T-cell (primary cell): ENCODE measurements at regions of chr12 and their contacts with region 1.

Region 1: GRCh38 chr12:57803319-57803893 is 15.1 kb downstream of the AVIL start:
- DNase-seq: peak in 26 of 35 experiments; percentile 4 to 52 (median 22)
- ATAC-seq: peak in 2 of 4 experiments; percentile 37 to 58
- H3K4me3 ChIP-seq: no peak overlapping the region
- H3K4me3 Mint-ChIP-seq: no peak overlapping the region
- H3K27ac ChIP-seq: no peak overlapping the region
- H3K27ac Mint-ChIP-seq: no peak overlapping the region
- H3K4me1 ChIP-seq: no peaks in the 10 kb centered on the region
- H3K4me1 Mint-ChIP-seq: no peaks in the 10 kb centered on the region
- H3K27me3 ChIP-seq: no peaks in the 10 kb centered on the region
- H3K27me3 Mint-ChIP-seq: no peaks in the 10 kb centered on the region

Region 2: GRCh38 chr12:57771708-57772428 is 31.5 kb before region 1 on chr12 and contains the start of gene METTL1:
- CTCF ChIA-PET with region 1: no interaction called
- POLR2A ChIA-PET with region 1: interaction called in 1 of 2 experiments, 10 read pairs
- DNase-seq: peak; percentile 74 to 93 (median 85)
- ATAC-seq: peak; percentile 90 to 92 (median 90)
- H3K4me3 ChIP-seq: peak within 1 kb of the TSS; percentile 74 to 91
- H3K4me3 Mint-ChIP-seq: peak within 1 kb of the TSS; percentile 94 to 96 (median 95)
- H3K27ac ChIP-seq: peak within 1 kb of the TSS; percentile 61
- H3K27ac Mint-ChIP-seq: peak within 1 kb of the TSS; percentile 93 to 94
- H3K4me1 ChIP-seq: peaks cover 9 to 26% of the 10 kb centered on the region in 2 experiments
- H3K4me1 Mint-ChIP-seq: peaks cover 12 to 24% (median 21%) of the 10 kb centered on the region in 3 donors
- H3K27me3 ChIP-seq: peaks cover 5% of the 10 kb centered on the region in 2 experiments
- H3K27me3 Mint-ChIP-seq: peaks cover 0 to 5% of the 10 kb centered on the region in 2 donors
- total RNA-seq, gene METTL1: 10.3 to 17.4 (median 14.5) TPM

Region 3: GRCh38 chr12:57865090-57865751 is 61.8 kb after region 1 on chr12:
- CTCF ChIA-PET with region 1: interaction called in 1 of 2 experiments, 10 read pairs
- POLR2A ChIA-PET with region 1: no interaction called
- DNase-seq: peak in 22 of 35 experiments; percentile 12 to 65 (median 30)
- ATAC-seq: peak; percentile 82 to 90 (median 86)
- H3K4me3 ChIP-seq: peak overlapping the region; percentile 44 to 68
- H3K4me3 Mint-ChIP-seq: peak overlapping the region; percentile 68 to 91 (median 81)
- H3K27ac ChIP-seq: no peak overlapping the region
- H3K27ac Mint-ChIP-seq: no peak overlapping the region
- H3K4me1 ChIP-seq: peaks cover 3 to 8% of the 10 kb centered on the region in 2 experiments
- H3K4me1 Mint-ChIP-seq: peaks cover 5 to 8% (median 8%) of the 10 kb centered on the region in 3 donors
- H3K27me3 ChIP-seq: peaks cover 0 to 46% of the 10 kb centered on the region in 2 experiments
- H3K27me3 Mint-ChIP-seq: peaks cover 6 to 14% of the 10 kb centered on the region in 2 donors

Region 4: DNA sequence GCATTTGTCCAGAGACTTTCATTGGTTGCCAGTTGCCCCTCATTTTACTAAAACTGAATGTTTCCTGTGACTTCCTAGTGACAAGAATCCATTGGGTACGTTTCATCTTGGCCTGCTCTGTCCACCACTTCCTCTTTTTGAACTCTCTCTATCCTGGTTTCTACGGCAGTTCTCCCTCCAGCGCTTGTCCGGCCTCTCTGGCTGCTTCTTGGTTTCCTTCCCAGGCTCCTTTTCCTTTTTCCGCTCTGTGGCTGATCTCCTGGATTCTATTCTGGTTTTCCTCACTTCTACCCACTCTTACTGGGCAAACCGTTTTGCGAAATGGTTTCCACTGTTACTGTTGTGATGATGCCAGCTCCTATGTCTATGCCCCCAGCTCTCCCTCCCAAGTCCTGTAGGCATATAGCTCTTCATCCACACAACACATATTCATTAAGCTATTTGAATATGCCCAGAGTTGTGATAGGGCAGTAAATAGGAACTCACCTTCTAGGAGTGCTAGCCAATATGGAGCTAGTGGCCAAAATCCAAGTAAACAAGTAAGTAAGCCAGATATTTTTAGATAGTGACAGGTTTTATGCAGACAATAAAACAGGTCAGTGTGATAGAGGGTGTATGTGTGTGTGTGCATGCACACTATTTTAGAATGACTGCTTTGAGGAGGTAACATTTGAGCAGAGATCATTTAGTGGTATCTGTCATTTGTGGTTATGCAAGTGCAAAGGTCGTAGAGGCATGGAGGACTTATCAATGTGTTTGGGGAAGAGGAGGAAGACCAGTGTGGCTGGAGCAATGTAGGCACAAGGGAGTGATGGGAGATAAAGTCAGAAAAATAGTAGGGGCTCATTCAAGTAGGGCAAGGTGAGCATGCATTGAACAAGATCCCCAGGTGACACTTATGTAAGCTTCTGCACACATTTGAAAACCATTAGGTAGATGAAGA is 71.0 kb after region 1 on chr12:
- CTCF ChIA-PET with region 1: interaction called in 1 of 2 experiments, 11 read pairs
- POLR2A ChIA-PET with region 1: no interaction called
- DNase-seq: no peak
- ATAC-seq: no peak
- H3K4me3 ChIP-seq: no peak overlapping the region
- H3K4me3 Mint-ChIP-seq: no peak overlapping the region
- H3K27ac ChIP-seq: no peak overlapping the region
- H3K27ac Mint-ChIP-seq: no peak overlapping the region
- H3K4me1 ChIP-seq: no peaks in the 10 kb centered on the region
- H3K4me1 Mint-ChIP-seq: no peaks in the 10 kb centered on the region
- H3K27me3 ChIP-seq: peaks cover 0 to 4% of the 10 kb centered on the region in 2 experiments
- H3K27me3 Mint-ChIP-seq: peaks cover 0 to 3% of the 10 kb centered on the region in 2 donors

Region 5: DNA sequence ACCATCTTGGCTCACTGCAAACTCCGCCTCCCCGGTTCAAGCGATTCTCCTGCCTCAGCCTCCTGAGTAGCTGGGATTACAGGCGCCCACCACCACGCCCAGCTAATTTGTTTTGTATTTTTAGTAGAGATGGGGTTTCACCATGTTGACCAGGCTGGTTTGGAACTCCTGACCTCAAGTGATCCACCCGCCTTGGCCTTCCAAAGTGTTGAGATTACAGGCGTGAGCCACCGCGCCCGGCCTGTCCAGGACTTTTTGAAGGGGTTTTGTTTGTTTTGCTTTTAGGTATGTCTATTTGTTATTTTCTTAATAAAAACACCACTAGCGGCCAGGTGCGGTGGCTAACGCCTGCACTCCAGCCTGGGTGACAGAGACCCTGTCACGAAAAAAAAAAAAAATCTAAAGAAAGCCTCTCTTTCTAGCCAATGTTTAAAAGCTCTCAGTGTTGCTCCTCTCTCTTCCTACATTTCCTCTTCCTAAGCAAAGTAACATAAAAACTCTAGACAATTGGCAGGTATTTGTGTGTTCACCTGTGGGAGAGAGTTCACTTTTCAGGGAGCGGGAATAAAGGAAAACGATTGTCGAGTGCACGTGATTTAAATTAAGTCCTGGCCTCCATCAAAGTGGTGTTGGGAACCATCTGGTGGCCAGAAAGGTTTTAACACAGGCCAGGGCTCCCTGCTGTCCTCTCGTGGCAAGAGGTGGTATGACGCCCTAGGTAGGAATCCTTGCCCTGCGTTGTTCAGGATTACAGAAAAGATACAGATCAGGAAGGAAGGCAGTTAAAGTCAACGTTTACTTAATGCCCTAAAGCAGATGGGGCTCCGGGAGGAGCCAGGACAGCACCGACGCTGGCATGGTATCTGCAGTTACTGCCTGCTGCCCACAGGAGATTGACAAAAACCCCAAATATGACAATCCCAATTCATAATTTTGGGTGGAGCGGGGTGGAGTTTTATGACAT is 101.7 kb after region 1 on chr12:
- CTCF ChIA-PET with region 1: interaction called, 9 to 17 read pairs
- POLR2A ChIA-PET with region 1: interaction called in 1 of 2 experiments, 3 read pairs
- DNase-seq: peak; percentile 53 to 92 (median 78)
- ATAC-seq: peak; percentile 97 to 100 (median 98)
- H3K4me3 ChIP-seq: no peak overlapping the region
- H3K4me3 Mint-ChIP-seq: peak overlapping the region; percentile 0 to 48 (median 29)
- H3K27ac ChIP-seq: no peak overlapping the region
- H3K27ac Mint-ChIP-seq: peak overlapping the region; percentile 2 to 61
- H3K4me1 ChIP-seq: peaks cover 2 to 10% of the 10 kb centered on the region in 2 experiments
- H3K4me1 Mint-ChIP-seq: peaks cover 8 to 11% (median 11%) of the 10 kb centered on the region in 3 donors
- H3K27me3 ChIP-seq: peaks cover 0 to 11% of the 10 kb centered on the region in 2 experiments
- H3K27me3 Mint-ChIP-seq: peaks cover 14 to 17% of the 10 kb centered on the region in 2 donors

Region 6: DNA sequence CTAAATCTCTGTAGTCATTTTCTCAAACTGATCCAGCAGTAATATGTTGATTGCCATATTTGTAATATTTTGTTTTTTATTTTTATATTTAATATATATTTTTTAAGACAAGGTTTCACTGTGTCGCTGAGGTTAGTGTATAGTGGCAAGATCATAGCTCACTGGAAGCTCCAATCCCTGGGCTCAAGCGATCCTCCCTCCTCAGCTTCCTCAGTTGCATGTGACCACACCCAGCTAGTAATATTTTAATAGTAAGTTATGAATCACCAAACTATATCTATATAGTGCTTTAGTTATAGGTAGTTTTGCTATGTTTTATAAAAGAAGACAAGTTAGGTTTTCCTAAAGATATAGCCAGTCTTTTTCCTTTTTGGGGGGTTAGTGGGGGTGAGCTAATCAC is 1138.9 kb after region 1 on chr12:
- CTCF ChIA-PET with region 1: no interaction called
- POLR2A ChIA-PET with region 1: no interaction called
- DNase-seq: no peak
- ATAC-seq: no peak
- H3K4me3 ChIP-seq: no peak overlapping the region
- H3K4me3 Mint-ChIP-seq: no peak overlapping the region
- H3K27ac ChIP-seq: no peak overlapping the region
- H3K27ac Mint-ChIP-seq: no peak overlapping the region
- H3K4me1 ChIP-seq: no peaks in the 10 kb centered on the region
- H3K4me1 Mint-ChIP-seq: no peaks in the 10 kb centered on the region
- H3K27me3 ChIP-seq: no peaks in the 10 kb centered on the region
- H3K27me3 Mint-ChIP-seq: no peaks in the 10 kb centered on the region